ENCODE measurements at regions of chr3 and their contacts with region 1.

Region 1: GRCh38 chr3:148943506-148944205 is 47.7 kb upstream of the GYG1 start:
- DNase-seq: no peak
- H3K4me3 ChIP-seq: no peak overlapping the region
- H3K27ac ChIP-seq: no peak overlapping the region
- H3K4me1 ChIP-seq: no peaks in the 10 kb centered on the region
- H3K27me3 ChIP-seq: no peaks in the 10 kb centered on the region
- CTCF ChIP-seq: peak in 2 of 3 donors; percentile 53 to 63
- EP300 ChIP-seq: no peak
- POLR2A ChIP-seq: no peak

Region 2: DNA sequence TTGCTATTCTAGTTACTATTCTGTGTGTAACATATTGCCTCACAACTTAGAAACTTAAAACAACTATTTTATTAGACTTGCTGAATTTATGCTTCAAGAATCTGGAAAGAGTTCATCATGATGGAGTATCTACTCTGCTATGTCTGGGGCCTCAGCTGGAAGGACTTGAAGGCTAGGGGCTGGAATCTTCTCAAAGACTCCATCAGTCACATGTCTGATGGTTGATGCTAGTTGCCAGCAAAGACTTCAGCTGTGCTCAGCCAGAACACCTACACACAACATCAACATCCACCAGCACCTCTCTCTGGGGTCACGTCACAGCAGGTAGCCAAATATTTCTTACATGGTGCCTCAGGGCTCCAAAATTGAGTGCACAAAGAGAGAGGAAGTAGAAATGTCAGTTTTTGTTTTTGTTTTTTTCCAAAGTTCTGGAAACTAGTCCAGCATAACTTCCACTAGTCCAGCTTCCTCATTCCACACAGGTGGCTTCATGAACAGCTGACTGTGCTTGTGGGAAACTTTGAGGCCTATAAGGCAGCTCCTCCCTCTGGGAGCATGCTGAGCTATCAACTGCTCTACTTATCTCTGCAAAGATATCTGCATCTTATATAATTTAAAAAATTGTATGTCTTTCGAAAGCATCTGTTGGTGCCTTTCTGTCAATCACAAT is 571.3 kb before region 1 on chr3:
- intact Hi-C with region 1: loop called in 1 of 4 experiments (anchors 5 kb)
- DNase-seq: no peak
- H3K4me3 ChIP-seq: no peak overlapping the region
- H3K27ac ChIP-seq: no peak overlapping the region
- H3K4me1 ChIP-seq: no peaks in the 10 kb centered on the region
- H3K27me3 ChIP-seq: no peaks in the 10 kb centered on the region
- CTCF ChIP-seq: no peak
- EP300 ChIP-seq: no peak
- POLR2A ChIP-seq: no peak

Region 3: GRCh38 chr3:148379763-148380382 is 563.8 kb before region 1 on chr3:
- intact Hi-C with region 1: loop called in 1 of 4 experiments (anchors 10 kb)
- DNase-seq: no peak
- H3K4me3 ChIP-seq: no peak overlapping the region
- H3K27ac ChIP-seq: no peak overlapping the region
- H3K4me1 ChIP-seq: no peaks in the 10 kb centered on the region
- H3K27me3 ChIP-seq: no peaks in the 10 kb centered on the region
- CTCF ChIP-seq: peak in 2 of 3 donors; percentile 31 to 53
- EP300 ChIP-seq: no peak
- POLR2A ChIP-seq: no peak

Region 4: GRCh38 chr3:148861277-148861869 is 82.3 kb before region 1 on chr3:
- intact Hi-C with region 1: loop called in 3 of 4 experiments (anchors 5 kb)
- DNase-seq: no peak
- H3K4me3 ChIP-seq: no peak overlapping the region
- H3K27ac ChIP-seq: no peak overlapping the region
- H3K4me1 ChIP-seq: no peaks in the 10 kb centered on the region
- H3K27me3 ChIP-seq: no peaks in the 10 kb centered on the region
- CTCF ChIP-seq: peak; percentile 47 to 79 (median 55)
- EP300 ChIP-seq: no peak
- POLR2A ChIP-seq: no peak

Region 5: DNA sequence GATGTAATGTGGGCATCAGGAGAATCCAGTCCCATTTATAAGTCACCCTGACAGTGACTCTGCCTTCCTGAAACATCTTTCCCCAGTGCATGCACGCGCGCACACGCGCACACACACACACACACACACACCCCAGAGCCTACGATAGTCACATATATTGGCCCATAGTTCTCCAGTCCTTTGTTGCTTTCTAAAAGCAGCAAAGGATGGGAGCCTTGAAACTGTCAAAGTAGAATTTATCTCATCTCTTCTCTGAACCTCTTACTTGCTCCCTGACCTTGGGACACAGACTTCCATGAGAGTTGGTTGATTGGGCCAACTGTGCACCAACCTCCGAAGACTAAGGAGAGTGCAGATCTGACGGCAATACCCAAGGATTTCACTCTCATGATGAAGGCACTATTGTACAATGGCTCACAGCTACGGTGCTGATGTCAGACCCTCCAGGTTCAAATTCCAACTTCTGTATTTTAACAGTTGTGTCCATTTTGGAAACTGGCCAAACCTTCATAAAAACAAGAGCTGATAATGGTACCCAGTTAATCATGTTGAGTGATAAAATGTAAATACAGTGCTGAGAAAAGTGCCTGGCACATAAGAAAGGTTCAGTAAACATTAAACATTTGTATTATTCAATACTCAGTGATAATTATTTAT is 70.3 kb before region 1 on chr3:
- intact Hi-C with region 1: loop called in 1 of 4 experiments (anchors 5 kb)
- DNase-seq: no peak
- H3K4me3 ChIP-seq: no peak overlapping the region
- H3K27ac ChIP-seq: no peak overlapping the region
- H3K4me1 ChIP-seq: no peaks in the 10 kb centered on the region
- H3K27me3 ChIP-seq: no peaks in the 10 kb centered on the region
- CTCF ChIP-seq: no peak
- EP300 ChIP-seq: no peak
- POLR2A ChIP-seq: no peak

Measured in ovary (tissue), 10 donors.